Breast epithelium (tissue), 4 donors: ENCODE measurements at regions of chr3 and their contacts with region 1.

Region 1: DNA sequence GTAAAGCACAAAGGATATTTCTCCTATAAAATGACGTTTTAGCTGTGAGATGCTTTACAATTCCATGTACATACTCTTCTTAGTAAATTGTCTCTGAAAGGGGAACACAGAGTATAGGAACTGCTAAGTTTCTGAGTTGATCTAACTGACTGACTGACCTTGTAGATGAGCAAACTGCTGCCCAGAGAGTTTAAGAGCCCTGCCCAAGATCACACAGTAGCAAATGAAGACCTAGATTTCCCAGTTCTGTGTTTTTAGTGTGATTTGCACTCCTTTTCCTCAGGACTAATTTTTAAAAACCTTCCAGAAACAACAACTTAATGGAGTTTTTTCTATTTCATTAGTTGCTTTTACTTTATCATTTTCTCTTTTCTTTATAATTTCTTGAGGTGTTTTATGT is 247.7 kb downstream of the PDCD6IP start:
- DNase-seq: no peak
- H3K4me3 ChIP-seq: no peak overlapping the region
- H3K27ac ChIP-seq: no peak overlapping the region
- H3K4me1 ChIP-seq: no peaks in the 10 kb centered on the region
- H3K27me3 ChIP-seq: no peaks in the 10 kb centered on the region
- CTCF ChIP-seq: no peak
- POLR2A ChIP-seq: no peak

Region 2: DNA sequence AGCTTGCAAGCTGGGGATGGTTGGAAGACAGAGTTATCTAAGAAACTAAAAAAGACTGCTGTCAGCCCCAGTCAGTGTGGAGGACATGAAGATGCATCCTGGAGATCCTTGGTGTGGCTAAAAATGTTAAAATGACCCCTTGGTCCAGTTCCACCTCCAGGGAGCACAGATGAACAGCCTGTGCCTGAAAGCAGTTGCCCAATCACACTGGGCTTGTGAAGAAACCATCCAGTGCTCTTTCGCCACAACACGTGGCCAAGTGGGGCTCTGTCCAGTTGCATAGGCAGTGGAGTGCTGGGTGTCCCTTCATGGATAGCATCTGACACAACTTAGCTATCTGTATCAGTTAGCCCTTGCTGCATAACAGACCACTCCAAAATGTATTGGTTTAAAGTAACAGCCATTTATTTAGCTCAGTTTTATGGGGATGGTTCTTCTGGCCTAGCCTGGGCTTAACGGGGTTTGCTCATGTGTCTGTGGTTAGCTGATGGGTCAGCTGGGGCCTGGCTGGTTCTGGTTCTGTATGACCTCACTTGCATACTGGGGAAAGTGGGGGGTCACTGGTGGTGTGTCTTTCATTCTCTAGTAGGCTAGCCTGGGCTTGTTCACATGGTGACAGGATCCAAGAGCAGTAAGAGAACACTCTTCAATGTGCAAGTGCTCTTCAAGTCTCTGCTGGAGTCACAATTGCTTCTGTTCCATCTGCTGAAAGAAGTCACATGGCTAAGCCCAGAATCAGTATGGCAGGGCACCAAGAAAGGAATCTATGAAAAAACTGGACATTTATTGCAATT is 21.5 kb before region 1 on chr3:
- intact Hi-C with region 1: loop called (anchors 2 kb)
- DNase-seq: no peak
- H3K4me3 ChIP-seq: no peak overlapping the region
- H3K27ac ChIP-seq: no peak overlapping the region
- H3K4me1 ChIP-seq: no peaks in the 10 kb centered on the region
- H3K27me3 ChIP-seq: no peaks in the 10 kb centered on the region
- CTCF ChIP-seq: no peak
- POLR2A ChIP-seq: no peak